Ovary (tissue), 10 donors: ENCODE measurements at regions of chr7 and their contacts with region 1.

Region 1: GRCh38 chr7:151085691-151086620 is at the start of gene AGAP3:
- DNase-seq: peak; percentile 82 to 87 (median 86)
- H3K4me3 ChIP-seq: peak within 1 kb of the TSS; percentile 70
- H3K27ac ChIP-seq: peak within 1 kb of the TSS; percentile 77 to 86
- H3K4me1 ChIP-seq: peaks cover 40% of the 10 kb centered on the region
- H3K27me3 ChIP-seq: no peaks in the 10 kb centered on the region
- CTCF ChIP-seq: no peak
- EP300 ChIP-seq: no peak
- POLR2A ChIP-seq: no peak
- total RNA-seq, gene AGAP3: 58.7 to 125 (median 101) TPM

Region 2: DNA sequence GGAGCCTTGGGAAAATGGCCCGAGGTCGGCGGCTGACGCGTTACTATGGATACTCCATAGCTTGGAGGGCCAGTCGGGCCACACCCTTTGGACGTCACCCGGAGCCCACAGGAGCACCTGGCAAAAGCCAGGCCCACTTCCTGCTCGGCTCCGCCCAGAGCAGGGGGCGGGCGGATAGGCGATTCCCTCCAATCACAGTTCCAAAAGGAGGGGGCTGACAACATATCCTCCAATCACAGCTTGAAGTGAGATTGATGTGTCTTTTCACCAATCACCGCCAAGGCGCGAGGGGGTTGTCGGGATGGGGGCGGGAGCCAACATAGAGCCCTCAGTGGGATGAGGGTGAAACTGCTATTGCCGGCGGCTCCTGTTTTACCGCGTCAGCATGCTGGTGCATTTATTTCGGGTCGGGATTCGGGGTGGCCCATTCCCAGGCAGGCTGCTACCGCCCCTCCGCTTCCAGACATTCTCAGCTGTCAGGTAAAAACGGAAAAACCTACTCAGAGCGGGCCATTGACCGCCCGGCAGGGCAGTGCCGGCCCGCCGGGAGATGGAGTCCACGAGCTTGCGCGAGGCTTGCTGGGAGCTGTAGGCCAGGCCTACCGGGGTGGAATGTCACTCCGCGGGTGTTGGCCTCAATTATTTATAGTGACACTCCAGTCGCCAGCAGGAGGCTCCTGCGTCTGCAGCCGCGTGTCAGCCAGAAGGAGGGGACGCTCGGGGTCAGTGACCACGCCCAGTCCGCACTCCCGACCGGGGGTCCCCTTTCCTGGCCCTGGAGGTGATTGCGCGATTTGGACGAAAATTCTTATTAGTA is 57.6 kb before region 1 on chr7 and contains the start of gene ABCB8:
- intact Hi-C with region 1: loop called in 1 of 4 experiments (anchors 2 kb)
- DNase-seq: peak; percentile 97 to 100 (median 98)
- H3K4me3 ChIP-seq: peak within 1 kb of the TSS; percentile 82
- H3K27ac ChIP-seq: peak within 1 kb of the TSS in 1 of 2 donors; percentile 74
- H3K4me1 ChIP-seq: peaks cover 4% of the 10 kb centered on the region
- H3K27me3 ChIP-seq: no peaks in the 10 kb centered on the region
- CTCF ChIP-seq: peak in 2 of 3 donors; percentile 45 to 64
- EP300 ChIP-seq: peak; percentile 2
- POLR2A ChIP-seq: peak; percentile 58
- total RNA-seq, gene ABCB8: 15.5 to 45.2 (median 29.1) TPM

Region 3: GRCh38 chr7:151059367-151060112 is 26.4 kb before region 1 on chr7 and contains the start of gene SLC4A2:
- intact Hi-C with region 1: loop called in 1 of 4 experiments (anchors 2 kb)
- DNase-seq: peak; percentile 82 to 91 (median 87)
- H3K4me3 ChIP-seq: peak within 1 kb of the TSS; percentile 81
- H3K27ac ChIP-seq: peak within 1 kb of the TSS; percentile 88 to 97
- H3K4me1 ChIP-seq: peaks cover 25% of the 10 kb centered on the region
- H3K27me3 ChIP-seq: no peaks in the 10 kb centered on the region
- CTCF ChIP-seq: peak in 2 of 3 donors; percentile 26 to 37
- EP300 ChIP-seq: no peak
- POLR2A ChIP-seq: peak; percentile 37
- total RNA-seq, gene SLC4A2: 55.6 to 127 (median 108) TPM